ENCODE measurements at regions of chr12 and their contacts with region 1.

Region 1: DNA sequence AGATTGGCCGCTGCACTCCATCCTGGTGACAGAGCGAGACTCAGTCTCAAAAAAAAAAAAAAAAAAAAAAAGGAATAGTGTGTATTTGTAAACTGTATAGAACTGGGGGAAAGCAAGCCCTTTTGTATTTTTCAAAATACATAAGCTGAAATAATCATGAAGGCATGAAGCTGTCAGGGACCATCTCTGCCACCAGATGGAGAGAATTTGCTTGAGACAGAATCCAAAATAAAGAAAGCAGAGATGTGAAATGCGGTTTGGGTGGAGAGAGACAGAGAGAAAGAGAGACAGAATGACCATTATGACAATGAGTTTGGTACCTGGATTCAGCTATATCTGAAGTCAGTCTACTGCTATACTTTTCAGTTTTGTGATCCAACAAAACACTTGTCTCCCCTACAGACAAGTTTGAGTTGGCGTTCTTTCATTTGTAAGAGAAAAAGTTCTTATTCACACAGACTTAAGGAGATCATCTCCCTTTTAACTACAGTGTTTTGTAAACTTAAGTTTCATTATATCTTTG is 155.7 kb upstream of the LRIG3 start:
- DNase-seq: no peak
- H3K4me3 ChIP-seq: no peak overlapping the region
- H3K27ac ChIP-seq: no peak overlapping the region
- H3K4me1 ChIP-seq: peaks cover 6% of the 10 kb centered on the region
- H3K27me3 ChIP-seq: no peaks in the 10 kb centered on the region
- CTCF ChIP-seq: no peak

Region 2: GRCh38 chr12:59113831-59114615 is 38.0 kb after region 1 on chr12:
- CTCF ChIA-PET with region 1: no interaction called
- POLR2A ChIA-PET with region 1: no interaction called
- intact Hi-C with region 1: no loop called
- DNase-seq: peak; percentile 84
- H3K4me3 ChIP-seq: no peak overlapping the region
- H3K27ac ChIP-seq: no peak overlapping the region
- H3K4me1 ChIP-seq: no peaks in the 10 kb centered on the region
- H3K27me3 ChIP-seq: no peaks in the 10 kb centered on the region
- CTCF ChIP-seq: peak; percentile 87

Region 3: GRCh38 chr12:59763835-59764234 is 687.8 kb after region 1 on chr12:
- CTCF ChIA-PET with region 1: interaction called, 13 read pairs
- POLR2A ChIA-PET with region 1: no interaction called
- intact Hi-C with region 1: no loop called
- DNase-seq: no peak
- H3K4me3 ChIP-seq: no peak overlapping the region
- H3K27ac ChIP-seq: no peak overlapping the region
- H3K4me1 ChIP-seq: no peaks in the 10 kb centered on the region
- H3K27me3 ChIP-seq: no peaks in the 10 kb centered on the region
- CTCF ChIP-seq: no peak